Dorsolateral prefrontal cortex (tissue), 120 donors: ENCODE measurements at regions of chr6 and their contacts with region 1.

Region 1: GRCh38 chr6:107847844-107848802 is 24.0 kb upstream of the SCML4 start:
- DNase-seq: peak; percentile 74 to 93 (median 79)
- H3K4me3 ChIP-seq: peak overlapping the region; percentile 28 to 68 (median 55)
- H3K27ac ChIP-seq: peak overlapping the region in 4 of 59 donors; percentile 17 to 64 (median 40)
- H3K27me3 ChIP-seq: peaks cover 0 to 4% (median 0%) of the 10 kb centered on the region in 45 donors
- CTCF ChIP-seq: peak; percentile 87 to 99 (median 96)

Region 2: DNA sequence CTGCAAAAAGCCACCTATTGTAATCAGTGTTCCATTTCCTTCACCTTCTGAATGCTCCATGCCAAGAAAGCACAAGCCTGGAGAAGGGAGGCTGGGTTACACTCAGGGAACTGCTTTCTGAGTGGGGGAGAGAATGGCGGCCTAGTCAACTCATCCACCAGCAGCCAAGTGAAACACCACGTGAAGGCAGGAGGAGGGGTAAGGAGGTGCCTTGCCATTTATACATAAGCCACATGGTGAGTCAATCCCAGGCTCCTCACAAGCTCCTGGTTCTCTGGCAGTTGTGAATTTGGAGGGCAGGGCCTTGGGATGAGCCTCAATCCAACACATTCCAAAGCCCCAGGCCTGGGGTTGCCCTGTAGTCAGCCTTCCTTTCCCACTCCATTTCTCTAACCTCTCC is 1023.0 kb before region 1 on chr6:
- intact Hi-C with region 1: no loop called
- DNase-seq: no peak
- H3K4me3 ChIP-seq: no peak overlapping the region
- H3K27ac ChIP-seq: no peak overlapping the region
- H3K27me3 ChIP-seq: peaks cover 0 to 4% (median 0%) of the 10 kb centered on the region in 45 donors
- CTCF ChIP-seq: no peak

Region 3: DNA sequence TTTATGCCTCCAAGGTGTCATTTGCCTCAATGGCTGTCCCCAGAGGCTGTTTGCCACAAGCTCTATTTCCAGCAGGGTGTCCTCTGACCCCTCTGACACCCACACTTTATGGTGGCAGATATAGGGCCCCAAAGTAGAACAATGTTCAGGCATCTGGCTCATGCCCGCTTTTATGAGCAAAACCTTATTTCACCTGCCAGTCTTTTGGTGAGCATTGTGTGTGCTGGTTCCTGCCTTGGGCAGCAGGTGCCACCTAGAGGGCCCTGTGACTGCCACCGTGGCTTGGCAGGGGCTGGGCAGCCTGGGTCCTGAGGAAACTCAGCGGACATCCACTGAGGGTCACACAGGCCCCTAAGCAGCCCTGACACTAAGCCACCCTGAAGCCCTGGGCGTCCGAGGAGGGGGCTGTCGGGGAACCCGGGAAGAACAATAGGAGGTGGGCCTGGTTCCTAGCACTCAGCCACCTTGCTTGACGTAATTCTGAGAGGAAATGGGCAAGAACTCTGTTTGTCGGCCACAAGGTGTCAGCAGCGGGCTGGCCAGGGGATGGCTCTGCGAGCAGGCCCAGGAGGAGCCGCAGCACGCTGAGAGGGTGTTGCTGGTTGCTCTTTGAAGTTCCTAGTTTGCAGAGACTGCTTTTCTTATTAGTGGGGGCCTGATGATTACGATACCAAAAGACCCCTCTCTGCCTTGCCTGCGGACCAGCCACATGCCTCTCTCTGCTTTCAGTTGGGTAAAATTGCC is 173.0 kb before region 1 on chr6:
- intact Hi-C with region 1: loop called (anchors 1 to 5 kb)
- DNase-seq: peak; percentile 64 to 88 (median 83)
- H3K4me3 ChIP-seq: peak overlapping the region in 28 of 59 donors; percentile 1 to 42 (median 28)
- H3K27ac ChIP-seq: peak overlapping the region in 4 of 59 donors; percentile 50 to 73 (median 56)
- H3K27me3 ChIP-seq: no peaks in the 10 kb centered on the region
- CTCF ChIP-seq: peak; percentile 72 to 96 (median 89)

Region 4: GRCh38 chr6:107704347-107705013 is 143.6 kb before region 1 on chr6:
- intact Hi-C with region 1: loop called in 1 of 2 experiments (anchors 10 kb)
- DNase-seq: peak in 1 of 10 donors; percentile 21
- H3K4me3 ChIP-seq: peak overlapping the region in 48 of 59 donors; percentile 3 to 59 (median 38)
- H3K27ac ChIP-seq: no peak overlapping the region
- H3K27me3 ChIP-seq: no peaks in the 10 kb centered on the region
- CTCF ChIP-seq: peak; percentile 68 to 95 (median 86)

Region 5: GRCh38 chr6:107800564-107801164 is 47.5 kb before region 1 on chr6:
- intact Hi-C with region 1: loop called in 1 of 2 experiments (anchors 5 kb)
- DNase-seq: no peak
- H3K4me3 ChIP-seq: no peak overlapping the region
- H3K27ac ChIP-seq: no peak overlapping the region
- H3K27me3 ChIP-seq: peaks cover 0 to 3% (median 0%) of the 10 kb centered on the region in 45 donors
- CTCF ChIP-seq: peak in 19 of 56 donors; percentile 9 to 60 (median 23)

Region 6: GRCh38 chr6:108080010-108080780 is 232.1 kb after region 1 on chr6:
- intact Hi-C with region 1: no loop called
- DNase-seq: no peak
- H3K4me3 ChIP-seq: no peak overlapping the region
- H3K27ac ChIP-seq: no peak overlapping the region
- H3K27me3 ChIP-seq: no peaks in the 10 kb centered on the region
- CTCF ChIP-seq: no peak